B cell (primary cell): ENCODE measurements at regions of chr15 and their contacts with region 1.

Region 1: GRCh38 chr15:70269901-70270751 is 172.4 kb upstream of the TLE3 start:
- DNase-seq: peak; percentile 30
- ATAC-seq: no peak
- H3K4me3 ChIP-seq: no peak overlapping the region
- H3K4me3 Mint-ChIP-seq: peak overlapping the region; percentile 44
- H3K27ac ChIP-seq: no peak overlapping the region
- H3K27ac Mint-ChIP-seq: peak overlapping the region; percentile 75
- H3K4me1 ChIP-seq: peaks cover 69% of the 10 kb centered on the region in 2 donors
- H3K4me1 Mint-ChIP-seq: peaks cover 73% of the 10 kb centered on the region
- H3K27me3 ChIP-seq: peaks cover 0 to 22% (median 0%) of the 10 kb centered on the region in 4 experiments
- H3K27me3 Mint-ChIP-seq: peaks cover 3% of the 10 kb centered on the region
- CTCF ChIP-seq: no peak

Region 2: GRCh38 chr15:70259028-70259424 is 11.1 kb before region 1 on chr15:
- CTCF ChIA-PET with region 1: interaction called, 8 read pairs
- POLR2A ChIA-PET with region 1: interaction called, 14 read pairs
- intact Hi-C with region 1: no loop called
- DNase-seq: peak; percentile 79
- ATAC-seq: peak; percentile 41
- H3K4me3 ChIP-seq: peak overlapping the region in 4 of 5 experiments; percentile 11 to 36 (median 26)
- H3K4me3 Mint-ChIP-seq: peak overlapping the region; percentile 81
- H3K27ac ChIP-seq: peak overlapping the region; percentile 16 to 53
- H3K27ac Mint-ChIP-seq: peak overlapping the region; percentile 85
- H3K4me1 ChIP-seq: peaks cover 54 to 63% of the 10 kb centered on the region in 2 donors
- H3K4me1 Mint-ChIP-seq: peaks cover 63% of the 10 kb centered on the region
- H3K27me3 ChIP-seq: no peaks in the 10 kb centered on the region
- H3K27me3 Mint-ChIP-seq: no peaks in the 10 kb centered on the region
- CTCF ChIP-seq: no peak